B cell (primary cell): ENCODE measurements at regions of chr3 and their contacts with region 1.

Region 1: DNA sequence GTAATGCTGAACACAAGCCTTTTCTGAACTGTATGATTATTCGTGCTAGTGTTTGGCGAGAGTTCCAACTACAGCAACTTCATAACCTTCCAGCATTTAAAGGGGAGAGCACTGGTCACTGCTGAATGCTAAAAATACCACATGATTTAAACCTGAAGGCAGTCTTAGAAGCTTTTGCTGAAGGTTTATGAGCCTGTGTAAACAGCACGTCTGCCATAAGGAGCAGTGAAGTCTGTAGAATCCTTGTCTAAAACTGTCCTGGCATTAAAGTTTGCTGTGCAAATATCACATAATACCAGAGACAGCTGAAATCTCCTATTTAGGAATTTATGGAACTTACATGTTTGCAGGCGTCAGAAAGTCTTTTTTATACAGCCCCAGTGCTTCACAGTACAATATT is 5.9 kb downstream of the SATB1 start:
- DNase-seq: no peak
- ATAC-seq: no peak
- H3K4me3 ChIP-seq: no peak overlapping the region
- H3K4me3 Mint-ChIP-seq: no peak overlapping the region
- H3K27ac ChIP-seq: no peak overlapping the region
- H3K27ac Mint-ChIP-seq: no peak overlapping the region
- H3K4me1 ChIP-seq: peaks cover 14 to 16% of the 10 kb centered on the region in 2 donors
- H3K4me1 Mint-ChIP-seq: peaks cover 24% of the 10 kb centered on the region
- H3K27me3 ChIP-seq: no peaks in the 10 kb centered on the region
- H3K27me3 Mint-ChIP-seq: no peaks in the 10 kb centered on the region
- CTCF ChIP-seq: no peak

Region 2: GRCh38 chr3:18454766-18455165 is 35.5 kb after region 1 on chr3:
- CTCF ChIA-PET with region 1: no interaction called
- POLR2A ChIA-PET with region 1: no interaction called
- intact Hi-C with region 1: loop called (anchors 5 kb)
- DNase-seq: no peak
- ATAC-seq: no peak
- H3K4me3 ChIP-seq: no peak overlapping the region
- H3K4me3 Mint-ChIP-seq: no peak overlapping the region
- H3K27ac ChIP-seq: no peak overlapping the region
- H3K27ac Mint-ChIP-seq: no peak overlapping the region
- H3K4me1 ChIP-seq: no peaks in the 10 kb centered on the region
- H3K4me1 Mint-ChIP-seq: no peaks in the 10 kb centered on the region
- H3K27me3 ChIP-seq: no peaks in the 10 kb centered on the region
- H3K27me3 Mint-ChIP-seq: peaks cover 2% of the 10 kb centered on the region
- CTCF ChIP-seq: no peak